Calu3 (cell line): ENCODE measurements at regions of chr10 and their contacts with region 1.

Region 1: GRCh38 chr10:58781873-58782488 is 269.3 kb downstream of the BICC1 start:
- DNase-seq: peak; percentile 23
- H3K4me3 Mint-ChIP-seq: no peak overlapping the region
- H3K27ac Mint-ChIP-seq: no peak overlapping the region
- H3K4me1 Mint-ChIP-seq: peaks cover 26% of the 10 kb centered on the region
- H3K27me3 Mint-ChIP-seq: no peaks in the 10 kb centered on the region
- CTCF ChIP-seq: peak; percentile 73

Region 2: DNA sequence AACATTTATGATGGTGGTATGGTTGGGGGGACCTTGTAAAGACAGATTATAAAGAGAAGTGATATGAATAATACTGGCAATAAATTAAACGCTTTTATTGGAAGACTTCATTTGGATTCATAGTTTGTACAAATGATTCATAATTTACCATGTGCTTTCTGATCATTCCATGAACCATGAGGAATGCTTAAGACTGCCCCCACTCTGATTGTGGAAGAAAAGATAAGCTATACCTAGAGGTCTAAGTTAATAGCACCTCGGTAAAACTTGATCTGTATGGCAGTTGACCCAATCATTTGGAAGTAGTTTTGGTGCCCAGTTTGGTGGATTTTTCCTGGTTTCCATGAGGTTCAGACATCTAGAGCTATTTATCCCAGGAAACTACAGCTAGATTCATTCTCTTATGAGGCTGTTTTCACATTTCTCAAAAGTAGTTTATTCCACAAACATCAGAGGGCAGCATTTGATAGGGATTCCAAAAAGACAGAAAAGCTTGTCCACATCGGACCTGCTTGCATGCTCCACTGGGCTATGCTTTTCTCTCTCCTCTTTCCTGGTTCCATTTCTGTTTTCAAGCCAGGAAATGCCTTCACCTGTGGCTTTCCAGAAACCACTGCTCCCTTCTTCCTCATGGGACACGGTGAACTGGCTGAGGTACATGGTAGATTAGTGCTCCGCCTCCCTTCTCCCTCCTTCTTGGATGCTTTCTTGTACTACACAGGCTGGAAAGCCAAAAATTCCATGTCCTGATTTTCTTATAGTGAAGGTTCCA is 367.5 kb before region 1 on chr10:
- CTCF ChIA-PET with region 1: interaction called, 3 read pairs
- intact Hi-C with region 1: loop called (anchors 10 kb)
- DNase-seq: peak; percentile 63
- H3K4me3 Mint-ChIP-seq: no peak overlapping the region
- H3K27ac Mint-ChIP-seq: no peak overlapping the region
- H3K4me1 Mint-ChIP-seq: peaks cover 32% of the 10 kb centered on the region
- H3K27me3 Mint-ChIP-seq: no peaks in the 10 kb centered on the region
- CTCF ChIP-seq: peak; percentile 71

Region 3: GRCh38 chr10:59234816-59235429 is 452.9 kb after region 1 on chr10:
- CTCF ChIA-PET with region 1: no interaction called
- intact Hi-C with region 1: loop called (anchors 5 kb)
- DNase-seq: peak; percentile 54
- H3K4me3 Mint-ChIP-seq: no peak overlapping the region
- H3K27ac Mint-ChIP-seq: no peak overlapping the region
- H3K4me1 Mint-ChIP-seq: no peaks in the 10 kb centered on the region
- H3K27me3 Mint-ChIP-seq: no peaks in the 10 kb centered on the region
- CTCF ChIP-seq: peak; percentile 40